ENCODE measurements at regions of chr12 and their contacts with region 1.

Region 1: DNA sequence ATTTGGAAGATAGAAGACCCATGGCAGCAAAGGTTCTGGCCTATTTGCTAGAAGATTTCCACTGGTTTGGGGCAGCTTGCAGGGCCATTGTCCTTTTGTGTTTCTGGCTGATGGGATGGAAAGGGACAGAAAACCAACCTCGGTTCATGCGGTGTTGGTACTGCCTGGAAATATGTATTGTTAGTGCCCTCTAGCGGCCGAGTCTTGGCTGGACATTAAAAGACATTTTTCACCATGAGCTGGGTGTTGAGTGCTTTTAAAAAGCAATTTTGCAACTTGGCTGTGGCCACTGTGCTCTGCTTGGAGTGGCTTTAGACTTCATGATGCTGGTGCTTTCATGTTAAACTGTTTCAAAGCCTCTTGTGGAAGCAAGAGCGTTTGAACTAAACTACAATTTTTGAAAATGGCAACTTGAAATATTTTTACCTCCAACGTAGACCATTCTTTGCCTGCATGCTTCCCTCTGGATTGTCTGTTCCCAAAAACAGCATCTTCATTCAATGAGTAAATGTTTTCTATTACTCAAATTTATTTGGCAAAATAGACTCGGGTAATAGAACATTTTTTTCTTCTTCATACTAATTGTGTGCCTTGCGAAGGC is 102.7 kb upstream of the TBX5 start:
- DNase-seq: peak; percentile 77
- H3K4me3 ChIP-seq: no peak overlapping the region
- H3K27ac ChIP-seq: no peak overlapping the region
- H3K4me1 ChIP-seq: no peaks in the 10 kb centered on the region
- H3K27me3 ChIP-seq: peaks cover 3% of the 10 kb centered on the region
- CTCF ChIP-seq: peak in 3 of 4 experiments; percentile 65 to 73 (median 68)
- POLR2A ChIP-seq: no peak

Region 2: DNA sequence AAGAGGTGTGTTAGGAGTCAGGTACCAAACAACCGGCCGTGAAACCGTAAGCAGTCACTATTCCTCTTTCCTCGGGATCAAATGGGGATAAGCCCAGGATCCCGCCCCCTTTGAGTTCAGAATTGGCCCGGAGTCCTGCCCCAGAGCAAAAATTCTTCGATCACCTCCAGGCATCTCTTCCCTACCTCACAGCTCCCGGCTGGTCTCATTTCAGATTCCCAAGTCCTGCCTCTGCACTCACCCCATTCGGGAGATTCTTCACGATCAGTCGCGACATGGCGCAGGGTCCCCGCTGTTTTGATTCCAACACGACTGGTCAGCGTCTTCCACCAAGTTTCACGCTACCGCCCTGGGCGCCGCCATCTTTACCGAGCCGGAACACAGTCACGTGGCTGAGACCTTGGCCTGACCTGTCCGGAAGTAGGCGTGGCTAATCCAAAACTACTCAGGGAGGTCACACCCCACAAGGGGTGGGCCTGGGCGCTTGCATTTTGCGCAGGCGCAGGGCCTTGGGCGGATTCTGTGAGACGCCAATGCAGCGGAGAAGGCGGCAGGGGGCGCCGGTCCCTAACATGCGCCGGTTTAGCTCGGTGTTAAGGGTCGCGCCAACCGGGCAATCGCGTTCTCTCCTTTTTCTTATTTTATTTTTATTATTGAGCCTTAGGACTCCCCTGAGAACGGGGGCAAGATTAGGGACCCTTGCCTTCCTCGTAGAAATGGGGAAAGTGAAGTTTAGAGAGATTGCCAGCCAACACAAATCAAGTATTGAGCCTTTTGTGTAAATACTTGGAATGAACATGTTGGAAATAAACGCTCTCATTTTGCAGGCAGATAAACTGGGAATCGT is 542.5 kb before region 1 on chr12 and contains the start of gene RBM19:
- intact Hi-C with region 1: loop called (anchors 5 kb)
- DNase-seq: peak; percentile 98
- H3K4me3 ChIP-seq: peak within 1 kb of the TSS; percentile 56 to 57
- H3K27ac ChIP-seq: peak within 1 kb of the TSS; percentile 35 to 36
- H3K4me1 ChIP-seq: no peaks in the 10 kb centered on the region
- H3K27me3 ChIP-seq: no peaks in the 10 kb centered on the region
- CTCF ChIP-seq: peak; percentile 62 to 94 (median 90)
- POLR2A ChIP-seq: peak; percentile 46
- total RNA-seq, gene RBM19: 27.2 to 49.9 TPM

Region 3: DNA sequence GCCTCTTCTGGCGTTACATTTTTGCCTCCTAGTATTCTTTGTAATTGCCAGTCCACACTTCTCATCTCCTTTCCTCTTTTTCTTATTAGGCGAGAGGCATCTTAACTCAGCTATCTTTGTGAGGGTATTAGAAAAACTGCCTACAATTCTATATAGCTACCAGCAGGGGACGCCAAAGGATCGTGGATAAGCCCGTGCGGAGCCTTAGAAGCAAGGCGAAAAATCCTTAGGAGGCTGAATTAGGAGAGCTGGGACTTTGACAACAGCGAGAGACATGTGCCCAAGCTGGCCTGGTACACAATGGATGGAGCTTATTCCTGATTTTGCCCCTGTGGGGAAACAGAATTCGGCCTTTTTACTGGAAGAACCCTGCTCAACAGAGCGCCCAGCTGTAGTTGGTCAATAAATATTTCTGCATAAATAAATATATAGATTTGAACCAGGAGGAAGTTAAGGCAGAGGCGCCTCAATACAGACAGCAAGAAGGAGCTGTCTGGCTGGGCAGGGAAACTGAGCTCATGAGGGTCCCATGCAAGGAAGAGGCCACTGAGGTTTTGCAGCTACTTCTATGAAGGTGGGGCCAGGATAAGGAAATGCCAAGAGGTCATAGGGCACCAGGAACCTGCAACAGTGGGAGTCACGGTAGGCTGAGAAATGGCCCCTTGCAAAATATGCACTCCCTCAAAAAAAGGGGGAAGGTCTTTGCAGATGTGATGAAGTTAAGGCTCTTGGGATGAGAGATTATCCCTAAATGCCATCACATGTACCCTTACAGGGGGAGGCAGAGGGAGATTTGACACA is 527.9 kb before region 1 on chr12:
- intact Hi-C with region 1: loop called (anchors 5 kb)
- DNase-seq: peak; percentile 47
- H3K4me3 ChIP-seq: no peak overlapping the region
- H3K27ac ChIP-seq: no peak overlapping the region
- H3K4me1 ChIP-seq: no peaks in the 10 kb centered on the region
- H3K27me3 ChIP-seq: no peaks in the 10 kb centered on the region
- CTCF ChIP-seq: peak; percentile 84 to 95 (median 89)
- POLR2A ChIP-seq: no peak

Region 4: DNA sequence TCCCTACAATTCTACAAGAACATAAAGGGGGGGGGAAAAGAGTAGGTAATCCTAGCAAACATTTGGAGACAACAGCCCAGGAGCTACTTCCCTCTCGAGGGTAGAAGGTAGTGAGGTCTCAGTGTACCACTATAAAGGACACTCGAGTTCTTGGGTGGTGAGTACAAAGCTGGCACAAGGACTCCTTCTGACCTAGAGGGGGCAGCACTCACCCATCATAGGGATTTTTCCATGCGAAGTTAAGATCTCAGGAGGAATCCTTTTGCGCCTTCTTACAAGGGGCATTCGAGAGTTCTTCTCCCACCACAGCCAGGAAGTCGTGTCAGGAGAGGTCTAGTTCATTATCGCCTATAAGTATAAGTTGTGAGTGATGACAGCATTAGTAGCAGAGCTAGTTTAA is 342.3 kb before region 1 on chr12:
- intact Hi-C with region 1: loop called (anchors 1 kb)
- DNase-seq: no peak
- H3K4me3 ChIP-seq: no peak overlapping the region
- H3K27ac ChIP-seq: no peak overlapping the region
- H3K4me1 ChIP-seq: no peaks in the 10 kb centered on the region
- H3K27me3 ChIP-seq: no peaks in the 10 kb centered on the region
- CTCF ChIP-seq: peak in 3 of 4 experiments; percentile 13 to 28 (median 14)
- POLR2A ChIP-seq: no peak

Measured in prostate gland (tissue), 2 donors.